T-cell (primary cell): ENCODE measurements at regions of chrX and their contacts with region 1.

Region 1: GRCh38 chrX:108527724-108528123 is 88.1 kb downstream of the COL4A5 start:
- DNase-seq: no peak
- ATAC-seq: no peak
- H3K4me3 ChIP-seq: no peak overlapping the region
- H3K4me3 Mint-ChIP-seq: no peak overlapping the region
- H3K27ac ChIP-seq: no peak overlapping the region
- H3K27ac Mint-ChIP-seq: no peak overlapping the region
- H3K4me1 ChIP-seq: no peaks in the 10 kb centered on the region
- H3K4me1 Mint-ChIP-seq: no peaks in the 10 kb centered on the region
- H3K27me3 ChIP-seq: peaks cover 0 to 5% of the 10 kb centered on the region in 2 experiments
- H3K27me3 Mint-ChIP-seq: peaks cover 1 to 25% of the 10 kb centered on the region in 2 donors

Region 2: GRCh38 chrX:108399427-108400162 is 128.1 kb before region 1 on chrX:
- CTCF ChIA-PET with region 1: no interaction called
- POLR2A ChIA-PET with region 1: no interaction called
- DNase-seq: no peak
- ATAC-seq: no peak
- H3K4me3 ChIP-seq: no peak overlapping the region
- H3K4me3 Mint-ChIP-seq: no peak overlapping the region
- H3K27ac ChIP-seq: no peak overlapping the region
- H3K27ac Mint-ChIP-seq: no peak overlapping the region
- H3K4me1 ChIP-seq: no peaks in the 10 kb centered on the region
- H3K4me1 Mint-ChIP-seq: no peaks in the 10 kb centered on the region
- H3K27me3 ChIP-seq: peaks cover 0 to 2% of the 10 kb centered on the region in 2 experiments
- H3K27me3 Mint-ChIP-seq: peaks cover 0 to 12% of the 10 kb centered on the region in 2 donors

Region 3: DNA sequence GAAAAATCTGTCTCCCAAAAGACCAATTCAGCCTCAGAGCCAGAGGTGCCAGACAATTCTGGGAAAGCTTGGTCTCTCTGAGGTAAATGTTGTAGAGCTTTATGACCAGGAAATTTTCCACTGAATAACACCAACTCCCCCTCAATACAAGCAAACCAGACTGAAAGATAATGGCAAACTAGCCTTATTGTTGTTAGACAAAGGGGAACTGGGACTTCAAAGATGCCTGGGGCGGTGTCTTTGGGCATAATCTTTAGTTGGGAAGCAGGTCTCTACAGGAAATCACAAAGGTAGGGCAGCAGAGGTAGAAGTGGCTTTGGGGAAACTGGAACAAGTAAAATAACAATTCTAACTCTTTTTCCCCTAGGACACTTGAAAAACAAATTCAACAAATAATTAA is 101.5 kb before region 1 on chrX:
- CTCF ChIA-PET with region 1: no interaction called
- POLR2A ChIA-PET with region 1: no interaction called
- DNase-seq: no peak
- ATAC-seq: no peak
- H3K4me3 ChIP-seq: no peak overlapping the region
- H3K4me3 Mint-ChIP-seq: no peak overlapping the region
- H3K27ac ChIP-seq: no peak overlapping the region
- H3K27ac Mint-ChIP-seq: no peak overlapping the region
- H3K4me1 ChIP-seq: no peaks in the 10 kb centered on the region
- H3K4me1 Mint-ChIP-seq: no peaks in the 10 kb centered on the region
- H3K27me3 ChIP-seq: no peaks in the 10 kb centered on the region
- H3K27me3 Mint-ChIP-seq: peaks cover 0 to 10% of the 10 kb centered on the region in 2 donors

Region 4: DNA sequence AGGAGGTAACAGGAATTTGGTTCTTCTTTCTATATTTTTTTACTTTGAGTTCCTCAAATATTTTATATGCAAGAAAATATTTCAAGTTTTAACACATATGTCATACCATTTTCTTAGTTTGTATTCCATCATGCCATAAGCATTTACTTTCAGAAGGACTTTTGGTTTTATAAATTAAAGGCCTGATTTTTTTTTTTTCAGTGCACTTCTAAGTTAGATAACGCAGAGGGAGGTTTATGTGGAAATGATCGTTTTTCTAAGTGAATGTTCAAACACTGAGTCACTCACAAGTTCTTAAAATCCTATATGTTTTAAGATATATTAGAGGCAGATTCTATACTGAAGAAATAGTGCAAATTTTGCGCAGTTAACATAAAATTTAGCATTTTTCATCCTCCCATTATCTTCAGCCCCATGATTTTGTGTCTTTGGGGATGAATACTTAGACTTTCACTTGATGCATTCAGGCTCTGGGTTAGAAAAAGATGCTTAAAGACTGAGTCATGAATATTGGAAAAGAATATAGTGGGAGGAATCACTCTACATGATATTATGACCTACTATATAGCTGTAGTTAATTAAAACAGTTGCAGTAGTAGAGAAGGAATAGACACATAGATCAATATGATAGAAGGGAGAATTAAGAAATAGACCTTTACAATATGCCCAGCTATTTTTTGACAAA is 33.2 kb before region 1 on chrX:
- CTCF ChIA-PET with region 1: no interaction called
- POLR2A ChIA-PET with region 1: no interaction called
- DNase-seq: no peak
- ATAC-seq: no peak
- H3K4me3 ChIP-seq: no peak overlapping the region
- H3K4me3 Mint-ChIP-seq: no peak overlapping the region
- H3K27ac ChIP-seq: no peak overlapping the region
- H3K27ac Mint-ChIP-seq: no peak overlapping the region
- H3K4me1 ChIP-seq: no peaks in the 10 kb centered on the region
- H3K4me1 Mint-ChIP-seq: no peaks in the 10 kb centered on the region
- H3K27me3 ChIP-seq: no peaks in the 10 kb centered on the region
- H3K27me3 Mint-ChIP-seq: peaks cover 0 to 6% of the 10 kb centered on the region in 2 donors

Region 5: GRCh38 chrX:108584617-108585211 is 57.0 kb after region 1 on chrX:
- CTCF ChIA-PET with region 1: no interaction called
- POLR2A ChIA-PET with region 1: interaction called in 1 of 2 experiments, 19 read pairs
- DNase-seq: no peak
- ATAC-seq: no peak
- H3K4me3 ChIP-seq: no peak overlapping the region
- H3K4me3 Mint-ChIP-seq: no peak overlapping the region
- H3K27ac ChIP-seq: no peak overlapping the region
- H3K27ac Mint-ChIP-seq: no peak overlapping the region
- H3K4me1 ChIP-seq: no peaks in the 10 kb centered on the region
- H3K4me1 Mint-ChIP-seq: no peaks in the 10 kb centered on the region
- H3K27me3 ChIP-seq: no peaks in the 10 kb centered on the region
- H3K27me3 Mint-ChIP-seq: peaks cover 0 to 18% of the 10 kb centered on the region in 2 donors